Sciatic nerve (tissue), 2 donors: ENCODE measurements at regions of chr22 and their contacts with region 1.

Region 1: DNA sequence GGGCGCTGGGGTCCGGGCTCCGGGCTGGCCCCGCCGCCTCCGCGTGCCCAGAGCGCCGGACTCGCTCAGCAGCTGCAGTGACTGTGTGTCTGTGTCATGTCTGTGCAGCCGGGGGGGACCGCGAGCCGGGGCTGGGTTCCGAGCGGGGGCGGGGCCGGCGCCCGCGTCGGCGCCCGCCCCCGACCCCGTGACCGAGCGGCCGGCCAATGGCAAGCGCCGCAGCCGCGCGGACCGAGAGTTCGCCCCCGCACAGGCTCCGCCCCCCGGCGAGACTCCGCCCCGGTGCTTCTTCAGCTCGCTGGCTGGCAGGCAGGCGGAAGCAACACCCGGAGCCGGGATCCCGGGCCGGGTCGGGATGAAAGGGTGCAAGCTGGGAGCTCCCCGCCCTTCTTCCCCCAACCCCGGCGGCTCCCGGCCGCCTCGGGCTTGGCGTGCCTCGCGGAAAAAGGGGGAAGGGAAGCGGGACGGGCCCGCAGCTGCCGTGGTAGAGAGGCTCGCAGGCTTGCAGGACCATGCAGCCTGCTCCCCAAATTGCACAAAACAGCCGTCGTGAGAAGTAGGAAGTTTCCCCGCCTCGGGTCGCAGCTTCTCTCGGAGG is 750 bp upstream of the LARGE1 start:
- DNase-seq: peak; percentile 100
- ATAC-seq: peak; percentile 95

Region 2: DNA sequence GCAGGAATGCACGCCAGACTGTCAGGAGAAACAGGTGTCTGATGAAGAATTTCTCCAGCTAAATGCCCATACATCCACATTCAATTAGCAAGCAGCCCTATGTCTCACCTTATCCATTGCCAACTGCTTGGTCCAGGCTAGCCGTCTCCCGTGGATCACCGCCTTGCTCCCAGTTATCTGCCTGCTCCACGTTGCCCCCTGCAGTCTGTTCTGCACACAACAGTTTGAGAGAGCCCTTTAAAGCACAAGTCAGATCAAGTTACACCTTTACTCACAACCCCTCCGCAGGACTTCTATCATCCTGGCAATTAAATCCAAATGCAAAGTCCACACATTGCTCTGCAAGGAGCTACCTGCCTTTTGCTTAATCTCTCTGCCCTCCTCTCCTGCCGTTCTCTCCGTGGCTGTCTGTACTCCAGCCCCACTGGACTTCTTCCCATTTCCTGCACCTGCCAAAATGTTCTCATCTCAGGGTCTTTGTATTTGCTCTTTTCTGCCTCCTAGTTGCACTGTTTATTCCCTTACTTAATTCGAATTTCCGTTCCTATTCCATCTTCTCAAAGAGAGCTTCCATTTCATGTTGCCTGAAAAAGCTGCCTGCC is 184.5 kb after region 1 on chr22:
- intact Hi-C with region 1: loop called (anchors 10 kb)
- DNase-seq: peak; percentile 73
- ATAC-seq: no peak